HEK293 (cell line): ENCODE measurements at regions of chr12 and their contacts with region 1.

Region 1: GRCh38 chr12:64551698-64552097 is 58.6 kb upstream of the RASSF3 start:
- H3K4me3 ChIP-seq: no peak overlapping the region
- H3K27ac ChIP-seq: no peak overlapping the region
- H3K4me1 ChIP-seq: no peaks in the 10 kb centered on the region
- CTCF ChIP-seq: no peak

Region 2: GRCh38 chr12:64538121-64538520 is 13.6 kb before region 1 on chr12:
- CTCF ChIA-PET with region 1: interaction called, 27 read pairs
- POLR2A ChIA-PET with region 1: no interaction called
- H3K4me3 ChIP-seq: no peak overlapping the region
- H3K27ac ChIP-seq: no peak overlapping the region
- H3K4me1 ChIP-seq: no peaks in the 10 kb centered on the region
- CTCF ChIP-seq: no peak

Region 3: GRCh38 chr12:64583771-64584421 is 32.2 kb after region 1 on chr12:
- CTCF ChIA-PET with region 1: interaction called, 12 read pairs
- POLR2A ChIA-PET with region 1: no interaction called
- H3K4me3 ChIP-seq: no peak overlapping the region
- H3K27ac ChIP-seq: no peak overlapping the region
- H3K4me1 ChIP-seq: 0 out of 2 replicates have a peak, but pooled peaks cover 2% of the 10 kb centered on the region
- CTCF ChIP-seq: no peak

Region 4: DNA sequence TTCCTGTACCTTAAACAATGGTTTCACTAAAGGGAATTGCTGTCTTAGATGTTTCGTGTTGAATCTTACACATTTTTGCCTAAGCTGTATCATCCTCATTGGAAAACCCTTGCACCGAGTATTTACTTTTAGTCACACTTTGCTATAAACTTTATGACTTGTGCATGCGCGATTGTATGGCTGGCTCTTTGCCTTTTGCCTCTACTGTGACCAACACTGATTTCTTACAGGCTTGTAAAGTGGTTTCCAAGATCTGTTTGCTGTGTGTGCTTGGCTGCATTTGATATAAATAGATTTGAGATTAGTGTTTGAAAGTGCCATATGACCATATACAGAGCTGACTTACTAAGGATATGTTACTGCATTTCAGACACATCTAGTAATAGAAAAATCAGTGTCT is 99.1 kb after region 1 on chr12:
- CTCF ChIA-PET with region 1: no interaction called
- POLR2A ChIA-PET with region 1: no interaction called
- H3K4me3 ChIP-seq: no peak overlapping the region
- H3K27ac ChIP-seq: no peak overlapping the region
- H3K4me1 ChIP-seq: peaks cover 3% of the 10 kb centered on the region; the same call in 1 of the 2 replicates
- CTCF ChIP-seq: no peak

Region 5: GRCh38 chr12:64663033-64663432 is 111.3 kb after region 1 on chr12:
- CTCF ChIA-PET with region 1: interaction called, 11 read pairs
- POLR2A ChIA-PET with region 1: no interaction called
- H3K4me3 ChIP-seq: no peak overlapping the region
- H3K27ac ChIP-seq: no peak overlapping the region
- H3K4me1 ChIP-seq: peaks cover 26% of the 10 kb centered on the region
- CTCF ChIP-seq: no peak

Region 6: DNA sequence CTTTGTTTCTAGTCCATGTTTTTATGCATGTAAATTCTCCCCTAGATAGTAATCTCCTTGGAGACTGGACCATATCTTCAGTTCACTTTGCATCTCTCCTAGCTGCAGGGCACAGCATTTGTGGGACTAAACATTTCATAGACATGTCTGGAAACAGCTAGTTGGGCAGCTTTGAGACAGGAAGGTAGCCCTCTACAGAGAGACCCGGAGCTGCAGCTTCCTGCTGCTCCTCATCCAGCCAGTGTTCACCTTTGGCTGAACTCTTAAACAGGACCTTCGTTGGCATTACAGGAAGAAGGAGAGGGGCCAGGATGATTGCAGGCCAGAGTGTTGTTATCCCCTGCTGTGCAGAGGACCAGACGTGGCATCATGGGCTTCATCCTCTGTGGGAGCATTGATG is 154.6 kb after region 1 on chr12:
- CTCF ChIA-PET with region 1: interaction called, 219 read pairs
- POLR2A ChIA-PET with region 1: no interaction called
- H3K4me3 ChIP-seq: no peak overlapping the region
- H3K27ac ChIP-seq: no peak overlapping the region
- H3K4me1 ChIP-seq: no peaks in the 10 kb centered on the region
- CTCF ChIP-seq: no peak

Region 7: GRCh38 chr12:64923536-64923935 is 371.8 kb after region 1 on chr12:
- CTCF ChIA-PET with region 1: no interaction called
- POLR2A ChIA-PET with region 1: no interaction called
- H3K4me3 ChIP-seq: no peak overlapping the region
- H3K27ac ChIP-seq: no peak overlapping the region
- H3K4me1 ChIP-seq: no peaks in the 10 kb centered on the region
- CTCF ChIP-seq: no peak